ENCODE measurements at regions of chr7 and their contacts with region 1.

Region 1: GRCh38 chr7:143008007-143008901 is 18.7 kb downstream of the OR9A2 start:
- DNase-seq: peak; percentile 74 to 90 (median 86)
- ATAC-seq: peak; percentile 96
- H3K4me3 ChIP-seq: no peak overlapping the region
- H3K4me1 ChIP-seq: no peaks in the 10 kb centered on the region
- CTCF ChIP-seq: peak; percentile 92

Region 2: GRCh38 chr7:142833174-142834048 is 174.8 kb before region 1 on chr7:
- intact Hi-C with region 1: no loop called
- DNase-seq: no peak
- ATAC-seq: no peak
- H3K4me3 ChIP-seq: no peak overlapping the region
- H3K4me1 ChIP-seq: no peaks in the 10 kb centered on the region
- CTCF ChIP-seq: no peak

Region 3: DNA sequence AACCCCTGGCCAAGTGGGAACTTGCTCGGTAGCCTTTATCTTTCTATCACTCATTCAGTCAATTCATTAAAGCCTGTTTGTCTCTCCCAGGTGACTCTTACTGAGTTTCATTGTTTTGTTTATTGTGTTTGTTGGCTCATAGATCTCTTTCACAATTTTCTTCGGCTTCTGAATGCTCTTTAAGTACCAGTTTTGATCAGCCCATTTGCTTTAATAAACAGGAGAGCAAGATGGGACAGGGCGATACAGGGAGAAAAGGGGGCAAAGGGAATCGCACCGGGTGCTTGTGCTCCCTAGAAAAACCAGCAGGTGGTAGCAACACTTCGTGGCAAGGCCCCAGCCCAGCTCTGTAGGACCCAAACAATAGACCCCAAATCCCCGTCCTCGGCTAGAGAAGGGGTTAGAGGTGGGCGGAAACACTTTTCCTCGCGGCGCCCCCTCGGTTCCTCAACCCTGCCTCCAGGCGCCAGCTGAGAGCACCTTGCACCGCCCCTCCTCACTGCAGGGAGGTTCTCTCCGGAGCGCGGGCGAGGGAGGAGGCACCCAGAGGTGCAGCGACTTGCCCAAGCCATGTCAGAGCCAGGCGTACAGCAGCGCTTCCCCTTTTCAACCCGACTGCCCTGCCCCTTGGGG is 154.4 kb before region 1 on chr7:
- intact Hi-C with region 1: loop called in 1 of 2 experiments (anchors 10 kb)
- DNase-seq: peak; percentile 72 to 80 (median 77)
- ATAC-seq: peak; percentile 80
- H3K4me3 ChIP-seq: peak overlapping the region; percentile 34
- H3K4me1 ChIP-seq: peaks cover 7% of the 10 kb centered on the region
- CTCF ChIP-seq: peak; percentile 65

Region 4: DNA sequence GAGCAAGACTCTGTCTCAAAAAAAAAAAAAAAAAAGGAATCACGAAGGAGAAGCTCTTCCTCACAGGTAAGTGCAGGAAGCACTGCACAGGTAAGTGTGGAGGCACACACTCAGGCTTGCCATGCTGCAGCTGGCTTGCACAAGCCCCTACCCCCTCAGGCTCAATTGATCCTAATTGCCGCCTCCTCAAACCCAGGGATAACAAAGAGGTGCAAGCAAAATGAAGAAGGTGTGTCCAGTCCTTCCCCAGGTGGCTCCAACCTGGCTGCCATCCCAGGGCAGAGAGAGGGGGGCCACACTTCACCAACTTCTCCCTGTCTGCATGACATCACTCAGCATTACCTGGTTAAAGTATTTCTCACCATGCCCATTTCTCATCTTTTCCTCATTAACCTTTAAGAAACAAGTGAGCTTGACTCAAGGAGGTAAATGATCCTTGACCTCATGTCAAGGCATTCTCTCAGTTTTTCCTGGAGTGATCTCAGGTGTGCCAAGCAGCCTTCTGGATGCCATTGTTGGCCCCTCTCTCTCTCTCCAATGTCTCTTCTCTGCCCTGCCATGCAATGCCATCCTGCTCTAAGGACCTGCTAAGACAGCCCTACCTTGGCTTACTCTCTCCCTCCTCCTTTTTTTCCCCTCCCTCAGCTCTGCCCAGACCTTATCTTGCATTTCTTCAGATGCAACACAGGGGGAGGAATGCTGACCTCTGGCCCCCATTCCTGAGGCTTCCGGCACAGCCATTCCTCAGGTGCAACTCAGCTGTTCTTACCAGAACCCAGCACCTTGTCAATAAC is 109.7 kb before region 1 on chr7:
- intact Hi-C with region 1: no loop called
- DNase-seq: no peak
- ATAC-seq: no peak
- H3K4me3 ChIP-seq: no peak overlapping the region
- H3K4me1 ChIP-seq: no peaks in the 10 kb centered on the region
- CTCF ChIP-seq: no peak

Region 5: GRCh38 chr7:142916508-142916907 is 91.7 kb before region 1 on chr7:
- intact Hi-C with region 1: no loop called
- DNase-seq: no peak
- ATAC-seq: no peak
- H3K4me3 ChIP-seq: no peak overlapping the region
- H3K4me1 ChIP-seq: no peaks in the 10 kb centered on the region
- CTCF ChIP-seq: no peak

Region 6: DNA sequence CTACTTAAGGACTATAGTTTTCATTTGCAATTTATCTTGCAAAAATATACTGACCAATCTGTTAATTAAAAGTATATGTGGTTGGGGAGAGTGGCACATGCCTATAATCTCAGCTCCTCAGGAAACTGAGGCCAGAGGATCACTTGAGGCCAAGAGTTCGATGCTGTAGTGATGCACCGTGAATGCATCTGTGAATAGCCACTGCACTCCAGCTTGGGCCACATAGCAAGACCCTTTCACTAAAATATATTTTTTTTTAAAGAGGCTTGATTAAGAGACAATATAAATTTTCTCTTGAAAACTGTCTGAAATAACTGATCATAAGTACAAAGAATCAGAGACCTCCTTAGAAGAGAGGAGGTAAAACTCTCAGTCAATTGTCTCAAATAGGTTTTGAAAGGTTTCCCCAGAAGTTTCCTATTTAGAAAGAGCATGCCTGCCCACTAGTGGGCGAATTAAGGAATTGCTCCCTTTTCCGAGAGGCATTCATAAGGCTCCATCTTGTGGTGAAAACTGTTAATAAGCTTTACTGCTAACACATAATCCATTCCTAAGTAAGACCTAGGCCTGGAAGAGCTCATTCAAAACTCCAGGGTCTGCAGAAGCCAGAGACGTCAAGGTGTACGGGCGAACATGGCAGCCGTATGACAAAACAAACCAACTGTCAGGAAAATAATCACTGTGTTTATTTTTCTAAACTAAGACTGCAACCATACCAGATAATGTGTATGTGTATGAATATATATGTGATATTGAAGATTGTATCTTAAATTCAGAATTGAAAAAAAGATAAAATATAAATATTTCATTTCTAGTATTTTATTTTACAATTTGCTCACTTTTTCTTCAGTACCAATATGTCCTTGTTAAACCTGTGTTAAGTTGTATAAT is 206.8 kb after region 1 on chr7:
- intact Hi-C with region 1: loop called (anchors 2 to 5 kb)
- DNase-seq: peak in 1 of 3 donors; percentile 57
- ATAC-seq: peak; percentile 96
- H3K4me3 ChIP-seq: no peak overlapping the region
- H3K4me1 ChIP-seq: no peaks in the 10 kb centered on the region
- CTCF ChIP-seq: peak; percentile 93

Measured in mucosa of descending colon (tissue), 3 donors.